A549 (cell line): ENCODE measurements at regions of chr17 and their contacts with region 1.

Region 1: GRCh38 chr17:41548844-41549595 is 20.9 kb upstream of the KRT19 start:
- DNase-seq: peak; percentile 94 to 96
- ATAC-seq: peak; percentile 79 to 91
- H3K4me3 ChIP-seq: peak overlapping the region; percentile 33
- H3K27ac ChIP-seq: peak overlapping the region; percentile 89 to 96
- H3K4me1 ChIP-seq: peaks cover 40% of the 10 kb centered on the region
- CTCF ChIP-seq: peak; percentile 99
- EP300 ChIP-seq: no peak
- POLR2A ChIP-seq: peak; percentile 16; the same call in 1 of the 2 replicates
- RAD21 ChIP-seq: peak; percentile 93 to 97

Region 2: GRCh38 chr17:40854159-40854814 is 694.7 kb before region 1 on chr17:
- CTCF ChIA-PET with region 1: interaction called, 183 read pairs
- POLR2A ChIA-PET with region 1: interaction called, 9 read pairs
- DNase-seq: peak; percentile 71 to 84
- ATAC-seq: peak; percentile 84 to 92
- H3K4me3 ChIP-seq: no peak overlapping the region
- H3K27ac ChIP-seq: peak overlapping the region; percentile 42 to 68
- H3K4me1 ChIP-seq: peaks cover 71% of the 10 kb centered on the region
- CTCF ChIP-seq: no peak
- EP300 ChIP-seq: peak; percentile 80; a peak in 3 of 5 replicates
- POLR2A ChIP-seq: no peak
- RAD21 ChIP-seq: peak in 1 of 2 experiments; percentile 42; a peak in 1 of 5 replicates

Region 3: GRCh38 chr17:41301916-41302901 is 246.8 kb before region 1 on chr17 and contains the start of gene KRTAP29-1:
- CTCF ChIA-PET with region 1: interaction called, 10 read pairs
- POLR2A ChIA-PET with region 1: no interaction called
- DNase-seq: no peak
- ATAC-seq: peak in 1 of 2 experiments; percentile 22; a peak in 1 of 6 replicates
- H3K4me3 ChIP-seq: no peak within 1 kb of the TSS
- H3K27ac ChIP-seq: no peak within 1 kb of the TSS
- H3K4me1 ChIP-seq: no peaks in the 10 kb centered on the region
- CTCF ChIP-seq: no peak
- EP300 ChIP-seq: no peak
- POLR2A ChIP-seq: no peak
- RAD21 ChIP-seq: no peak
- polyA plus RNA-seq, gene KRTAP29-1: not detected in 2 replicates

Region 4: GRCh38 chr17:41411072-41411840 is 137.8 kb before region 1 on chr17:
- CTCF ChIA-PET with region 1: interaction called, 60 read pairs
- POLR2A ChIA-PET with region 1: no interaction called
- DNase-seq: no peak
- ATAC-seq: no peak
- H3K4me3 ChIP-seq: no peak overlapping the region
- H3K27ac ChIP-seq: no peak overlapping the region
- H3K4me1 ChIP-seq: no peaks in the 10 kb centered on the region
- CTCF ChIP-seq: no peak
- EP300 ChIP-seq: no peak
- POLR2A ChIP-seq: no peak
- RAD21 ChIP-seq: no peak

Region 5: GRCh38 chr17:41530062-41531051 is 18.7 kb before region 1 on chr17:
- CTCF ChIA-PET with region 1: interaction called, 141 read pairs
- POLR2A ChIA-PET with region 1: interaction called, 10 read pairs
- DNase-seq: peak; percentile 85 to 89
- ATAC-seq: peak; percentile 82 to 95
- H3K4me3 ChIP-seq: no peak overlapping the region
- H3K27ac ChIP-seq: peak overlapping the region; percentile 59 to 83
- H3K4me1 ChIP-seq: peaks cover 29% of the 10 kb centered on the region
- CTCF ChIP-seq: no peak
- EP300 ChIP-seq: no peak
- POLR2A ChIP-seq: no peak; the same call in 1 of the 2 replicates
- RAD21 ChIP-seq: no peak

Region 6: DNA sequence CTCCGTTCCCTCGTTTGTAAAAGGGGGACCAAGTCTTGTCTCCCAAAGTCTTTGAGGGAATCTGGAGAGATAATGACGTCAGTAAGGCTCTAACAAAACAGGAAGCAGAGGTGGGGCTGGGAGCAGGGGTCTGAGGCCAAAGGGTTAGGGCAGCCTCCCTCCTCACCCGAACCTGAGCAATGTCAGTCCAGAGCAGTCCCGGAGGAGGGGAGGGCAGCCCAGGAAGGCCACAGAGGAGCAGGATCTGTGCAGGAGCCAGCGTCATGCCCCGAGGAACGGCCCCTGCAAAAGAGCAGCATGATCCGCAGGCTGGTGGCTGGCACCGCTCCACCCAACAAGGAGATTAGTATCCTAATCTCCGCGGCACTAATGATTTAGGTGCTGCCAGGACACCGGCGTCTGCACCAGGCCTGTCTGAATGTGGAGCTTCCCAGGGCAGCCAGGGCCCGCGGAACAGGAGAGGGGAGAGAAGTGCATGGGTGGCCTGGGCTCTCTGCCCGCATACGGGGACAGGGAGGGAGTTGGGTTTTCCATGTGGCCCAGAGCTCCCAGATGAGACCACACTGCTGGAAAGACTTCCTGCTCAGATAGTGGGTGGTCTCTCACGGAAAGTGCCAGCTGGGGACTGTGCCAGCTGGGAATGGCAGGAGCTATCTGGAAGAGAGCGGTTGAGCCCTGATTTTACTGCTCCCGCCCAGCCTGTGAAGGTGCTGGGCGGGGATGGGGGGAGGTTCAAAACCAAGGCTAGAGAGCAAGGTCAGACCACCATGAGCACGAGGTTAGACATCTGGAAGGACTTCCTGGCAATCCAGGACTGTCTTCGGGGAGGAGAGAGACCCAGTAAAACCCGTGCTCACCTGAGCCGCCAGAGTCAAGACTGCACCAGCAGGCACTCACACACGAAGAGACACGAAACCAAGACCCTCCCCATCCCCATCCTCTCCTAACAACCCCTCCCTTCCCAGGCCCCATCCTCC is 86.4 kb after region 1 on chr17:
- CTCF ChIA-PET with region 1: interaction called, 34 read pairs
- POLR2A ChIA-PET with region 1: no interaction called
- DNase-seq: no peak
- ATAC-seq: peak; percentile 27 to 47; a peak in 3 of 6 replicates
- H3K4me3 ChIP-seq: no peak overlapping the region
- H3K27ac ChIP-seq: no peak overlapping the region
- H3K4me1 ChIP-seq: no peaks in the 10 kb centered on the region
- CTCF ChIP-seq: no peak
- EP300 ChIP-seq: no peak
- POLR2A ChIP-seq: no peak
- RAD21 ChIP-seq: no peak

Region 7: DNA sequence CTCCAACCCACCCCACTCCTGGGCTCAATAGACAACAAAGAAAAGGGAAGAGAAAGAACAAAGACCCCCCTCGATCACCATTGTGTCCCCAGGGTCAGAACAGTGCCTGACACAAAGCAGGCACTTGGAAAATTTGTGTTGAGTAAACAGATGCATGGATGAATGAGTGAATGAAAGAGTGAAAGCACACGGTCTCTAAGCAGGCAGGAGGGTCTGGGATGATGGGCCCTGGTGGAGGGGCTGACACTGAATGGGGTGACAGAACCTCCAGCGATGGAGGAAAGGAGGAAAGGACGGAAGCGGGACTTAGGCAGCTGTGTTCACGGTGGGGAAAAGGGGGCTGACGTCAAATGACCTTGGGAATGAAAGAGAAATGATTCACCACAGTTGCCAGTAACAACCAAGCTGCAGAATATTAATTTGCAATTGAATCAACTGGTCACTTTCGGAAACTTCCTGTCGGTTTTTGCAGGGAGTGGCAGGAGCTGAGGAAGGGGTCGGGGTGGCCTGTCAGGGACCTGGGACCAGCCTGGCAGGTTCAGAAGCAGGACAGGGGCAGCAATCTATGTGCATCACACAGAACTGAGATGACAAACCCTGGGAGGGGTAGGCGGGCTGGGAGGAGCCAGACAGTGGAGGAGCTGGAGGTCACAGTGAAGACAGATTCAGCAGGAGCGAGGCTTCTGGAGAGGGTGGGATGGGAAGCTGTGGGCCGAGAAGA is 156.4 kb after region 1 on chr17:
- CTCF ChIA-PET with region 1: no interaction called
- POLR2A ChIA-PET with region 1: no interaction called
- DNase-seq: no peak
- ATAC-seq: peak; percentile 59 to 64; a peak in 5 of 6 replicates
- H3K4me3 ChIP-seq: no peak overlapping the region
- H3K27ac ChIP-seq: 0 out of 6 replicates have a peak overlapping the region, but pooled peaks of 1 of the 2 experiments have one; percentile 13
- H3K4me1 ChIP-seq: peaks cover 13% of the 10 kb centered on the region
- CTCF ChIP-seq: no peak
- EP300 ChIP-seq: no peak
- POLR2A ChIP-seq: no peak
- RAD21 ChIP-seq: no peak